PC-3 (cell line): ENCODE measurements at regions of chr6 and their contacts with region 1.

Region 1: DNA sequence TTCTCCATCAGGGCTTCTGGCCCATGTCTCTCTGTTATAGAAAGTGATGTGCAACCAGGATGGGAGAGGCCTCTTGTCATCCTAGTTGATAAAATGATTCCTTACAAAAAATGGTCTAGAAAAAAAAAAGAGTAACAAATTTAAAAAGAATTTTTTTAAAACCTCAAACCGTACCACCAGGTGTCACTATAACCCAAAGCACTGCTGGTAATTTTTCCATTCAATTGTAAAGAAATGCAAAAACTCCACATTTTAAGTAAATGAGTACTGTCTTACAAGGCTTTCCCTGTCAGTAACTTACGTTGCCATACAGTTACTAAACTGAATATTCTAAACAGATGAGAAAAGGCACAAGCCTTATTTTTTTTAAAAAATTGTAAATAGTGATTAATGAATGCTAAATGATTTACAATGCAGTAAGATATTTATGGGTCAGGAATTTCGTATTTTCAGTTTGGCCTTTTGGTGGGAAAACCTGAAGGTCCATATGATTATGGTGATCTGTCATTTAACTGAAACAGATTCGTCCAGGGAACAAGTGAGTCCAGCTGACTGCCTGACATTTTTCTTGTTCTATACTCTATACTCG is 95.4 kb downstream of the OGFRL1 start:
- DNase-seq: peak; percentile 72
- ATAC-seq: no peak
- H3K4me3 ChIP-seq: no peak overlapping the region
- H3K27ac ChIP-seq: no peak overlapping the region
- H3K4me1 ChIP-seq: peaks cover 36% of the 10 kb centered on the region
- H3K27me3 ChIP-seq: no peaks in the 10 kb centered on the region
- CTCF ChIP-seq: peak; percentile 68

Region 2: DNA sequence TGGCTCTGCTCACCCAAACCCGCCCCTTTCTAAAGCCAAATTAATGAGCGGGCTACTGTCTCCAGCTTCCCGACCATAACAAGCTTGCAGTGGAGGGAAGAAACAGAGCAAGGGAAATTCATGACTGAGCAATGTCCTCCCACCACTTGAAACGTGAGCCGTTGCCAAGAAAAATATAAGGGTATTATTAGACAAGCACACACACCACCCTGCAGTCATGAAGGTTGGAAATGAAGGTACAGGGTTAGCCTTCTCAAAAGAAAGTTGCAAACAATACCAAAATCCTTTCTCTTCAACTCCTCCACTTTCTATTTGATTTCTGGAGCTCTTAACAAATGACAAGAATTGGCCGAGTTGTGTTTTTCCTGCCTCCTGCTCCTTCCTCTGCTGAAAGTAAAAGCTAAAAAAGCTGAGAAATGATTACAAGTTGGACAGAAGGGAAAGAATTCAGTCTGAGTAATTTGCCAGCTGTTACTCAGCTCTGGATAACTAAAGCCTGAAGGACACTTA is 276.0 kb before region 1 on chr6:
- CTCF ChIA-PET with region 1: no interaction called
- POLR2A ChIA-PET with region 1: no interaction called
- intact Hi-C with region 1: no loop called
- DNase-seq: no peak
- ATAC-seq: no peak
- H3K4me3 ChIP-seq: no peak overlapping the region
- H3K27ac ChIP-seq: no peak overlapping the region
- H3K4me1 ChIP-seq: no peaks in the 10 kb centered on the region
- H3K27me3 ChIP-seq: peaks cover 18% of the 10 kb centered on the region
- CTCF ChIP-seq: no peak

Region 3: DNA sequence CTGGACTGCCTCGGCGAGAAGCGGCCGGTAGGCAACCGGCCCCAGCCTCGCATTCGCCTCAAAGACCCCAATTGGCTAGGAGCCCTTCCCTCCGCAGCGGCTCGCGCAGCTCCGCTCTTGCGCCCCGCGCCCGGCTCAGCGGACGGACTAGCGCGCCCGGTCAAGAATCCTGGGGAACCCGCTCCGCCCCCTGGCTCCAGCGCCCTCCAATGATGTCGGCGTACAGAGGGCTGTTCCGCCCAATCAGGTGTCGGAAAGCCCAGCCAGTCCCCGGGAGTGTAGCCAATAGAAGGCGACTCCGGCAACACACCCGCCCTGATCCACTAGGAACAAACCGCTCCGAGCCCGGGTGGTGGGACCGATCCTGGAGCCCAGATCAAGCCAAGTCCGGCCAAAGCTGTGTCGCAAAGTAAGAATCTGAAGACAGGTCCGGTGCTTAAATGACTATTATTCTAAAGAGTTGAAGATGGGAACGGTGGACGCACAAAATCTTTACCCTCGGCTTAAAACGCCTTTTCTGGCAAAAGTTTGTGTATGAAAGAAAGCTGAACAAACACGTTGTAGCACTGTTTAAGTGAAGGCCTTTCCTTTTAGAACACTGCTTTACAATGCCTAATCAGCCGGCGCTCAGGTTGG is 36.8 kb after region 1 on chr6:
- CTCF ChIA-PET with region 1: no interaction called
- POLR2A ChIA-PET with region 1: no interaction called
- intact Hi-C with region 1: loop called (anchors 2 kb)
- DNase-seq: peak; percentile 92
- ATAC-seq: peak; percentile 96
- H3K4me3 ChIP-seq: peak overlapping the region; percentile 91
- H3K27ac ChIP-seq: no peak overlapping the region
- H3K4me1 ChIP-seq: peaks cover 18% of the 10 kb centered on the region
- H3K27me3 ChIP-seq: no peaks in the 10 kb centered on the region
- CTCF ChIP-seq: no peak

Region 4: DNA sequence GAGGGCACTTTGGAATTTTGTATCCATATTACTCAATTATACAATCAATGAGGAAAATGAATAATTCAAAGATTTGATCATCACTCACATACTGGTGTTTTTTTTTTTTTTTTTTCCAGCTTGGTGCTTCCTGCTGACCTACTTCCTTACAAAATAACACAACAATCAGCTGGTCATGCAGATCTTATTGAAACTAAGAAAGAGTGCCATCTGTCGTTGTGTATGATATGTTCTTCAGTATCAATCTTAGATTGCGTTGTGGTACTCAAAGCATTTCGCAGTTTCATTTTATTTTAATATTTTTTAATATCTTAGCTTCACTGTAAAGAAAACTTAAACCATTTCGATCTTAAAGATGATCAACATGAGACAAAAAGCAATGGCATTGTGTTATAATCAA is 60.2 kb after region 1 on chr6:
- CTCF ChIA-PET with region 1: interaction called, 16 read pairs
- POLR2A ChIA-PET with region 1: interaction called, 3 read pairs
- intact Hi-C with region 1: loop called (anchors 1 kb)
- DNase-seq: peak; percentile 40
- ATAC-seq: peak; percentile 76
- H3K4me3 ChIP-seq: no peak overlapping the region
- H3K27ac ChIP-seq: no peak overlapping the region
- H3K4me1 ChIP-seq: no peaks in the 10 kb centered on the region
- H3K27me3 ChIP-seq: no peaks in the 10 kb centered on the region
- CTCF ChIP-seq: peak; percentile 49

Region 5: DNA sequence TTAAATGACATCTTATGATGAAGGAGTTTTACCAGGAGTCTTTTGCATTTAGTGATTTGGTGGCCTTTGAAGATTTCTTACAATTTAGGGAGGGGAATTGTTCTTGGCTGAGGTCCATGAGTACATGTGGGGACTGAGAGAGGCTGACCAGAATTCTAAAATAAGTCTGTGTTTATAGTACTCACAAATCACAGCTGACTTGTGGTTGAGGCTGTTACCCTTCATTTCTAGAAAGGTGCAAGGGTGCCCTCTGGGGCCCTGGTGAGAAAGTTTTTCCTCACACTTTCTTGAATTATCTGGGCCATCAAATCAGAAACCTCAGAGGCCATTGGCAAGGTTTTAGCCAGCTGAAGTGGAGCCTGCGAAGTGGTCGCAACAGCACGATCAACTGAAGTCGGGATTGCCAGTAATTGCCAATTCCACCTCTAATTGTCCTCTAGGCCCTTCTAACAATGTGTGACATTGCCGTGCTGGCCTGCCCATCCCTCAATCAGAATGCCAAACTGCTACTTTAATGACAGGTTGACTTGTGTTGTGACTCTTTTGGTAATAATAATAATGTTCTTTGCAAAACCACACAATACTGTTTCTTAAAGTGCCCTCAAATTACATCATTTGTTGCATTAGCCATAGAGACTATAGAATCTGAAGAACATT is 126.2 kb after region 1 on chr6:
- CTCF ChIA-PET with region 1: no interaction called
- POLR2A ChIA-PET with region 1: no interaction called
- intact Hi-C with region 1: loop called (anchors 1 kb)
- DNase-seq: peak; percentile 60
- ATAC-seq: peak; percentile 56
- H3K4me3 ChIP-seq: no peak overlapping the region
- H3K27ac ChIP-seq: no peak overlapping the region
- H3K4me1 ChIP-seq: no peaks in the 10 kb centered on the region
- H3K27me3 ChIP-seq: no peaks in the 10 kb centered on the region
- CTCF ChIP-seq: peak; percentile 68